ENCODE measurements at regions of chr16 and their contacts with region 1.

Region 1: GRCh38 chr16:2838928-2839327 is 8.8 kb downstream of the ZG16B start:
- DNase-seq: no peak
- ATAC-seq: peak; percentile 51
- H3K4me3 ChIP-seq: no peak overlapping the region
- H3K27ac ChIP-seq: peak overlapping the region; percentile 7
- H3K4me1 ChIP-seq: peaks cover 25 to 72% of the 10 kb centered on the region in 2 experiments
- H3K27me3 ChIP-seq: no peaks in the 10 kb centered on the region
- CTCF ChIP-seq: peak in 2 of 3 experiments; percentile 93 to 95; a peak in 4 of 6 replicates
- POLR2A ChIP-seq: no peak
- RAD21 ChIP-seq: no peak

Region 2: DNA sequence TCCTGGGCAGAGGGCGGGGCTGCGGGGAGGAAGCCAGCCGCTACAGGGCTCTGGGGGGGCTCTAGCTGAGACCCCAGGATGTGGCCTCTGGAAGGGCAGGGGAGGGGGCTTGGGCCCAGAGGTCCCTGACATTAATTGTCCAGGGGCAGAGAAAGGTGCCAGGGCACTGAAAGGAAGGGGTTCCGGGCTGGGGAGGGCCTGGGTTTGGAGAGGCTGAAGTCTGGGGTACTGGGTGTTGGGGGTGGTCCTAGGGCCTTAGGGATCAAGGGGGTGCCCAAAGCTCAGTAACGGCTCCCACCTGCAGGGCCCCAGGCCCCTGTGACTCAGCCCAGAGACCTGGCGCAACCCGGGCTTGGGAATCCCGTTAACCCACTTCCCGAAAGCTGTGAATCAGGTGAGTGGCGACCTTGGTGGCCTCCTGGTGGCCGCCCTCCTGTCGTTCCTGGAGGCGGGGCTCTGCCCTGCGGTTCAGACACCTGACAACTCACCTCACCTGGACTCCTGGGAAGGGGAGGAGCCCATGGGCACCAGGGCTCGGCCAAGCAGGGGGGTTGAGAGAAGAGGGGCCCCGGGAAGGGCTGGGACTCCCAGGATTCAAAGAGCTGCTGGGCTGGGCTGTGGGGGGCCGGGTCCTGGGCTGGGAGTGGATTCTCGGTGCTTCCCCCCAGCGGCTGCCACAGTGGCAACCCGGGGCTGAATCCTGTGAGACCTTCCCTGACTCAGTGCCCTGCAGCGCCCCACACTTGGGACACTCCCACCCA is 19.5 kb after region 1 on chr16:
- CTCF ChIA-PET with region 1: interaction called, 12 read pairs
- POLR2A ChIA-PET with region 1: interaction called, 3 read pairs
- RAD21 ChIA-PET with region 1: no interaction called
- intact Hi-C with region 1: loop called (anchors 1 kb)
- DNase-seq: peak; percentile 85
- ATAC-seq: peak; percentile 83
- H3K4me3 ChIP-seq: peak overlapping the region; percentile 52 to 69
- H3K27ac ChIP-seq: peak overlapping the region; percentile 89
- H3K4me1 ChIP-seq: peaks cover 18 to 52% of the 10 kb centered on the region in 2 experiments
- H3K27me3 ChIP-seq: no peaks in the 10 kb centered on the region
- CTCF ChIP-seq: no peak; a peak in 3 of 6 replicates
- POLR2A ChIP-seq: no peak
- RAD21 ChIP-seq: no peak; the same call in 1 of the 2 replicates

Region 3: GRCh38 chr16:2867987-2868789 is 29.3 kb after region 1 on chr16:
- CTCF ChIA-PET with region 1: interaction called, 42 read pairs
- POLR2A ChIA-PET with region 1: interaction called, 14 read pairs
- RAD21 ChIA-PET with region 1: interaction called in 1 of 2 experiments, 10 read pairs
- intact Hi-C with region 1: loop called (anchors 1 kb)
- DNase-seq: peak; percentile 86
- ATAC-seq: peak; percentile 96
- H3K4me3 ChIP-seq: peak overlapping the region; percentile 55 to 73
- H3K27ac ChIP-seq: peak overlapping the region; percentile 92
- H3K4me1 ChIP-seq: peaks cover 8 to 24% of the 10 kb centered on the region in 2 experiments; a peak in 3 of 4 replicates
- H3K27me3 ChIP-seq: no peaks in the 10 kb centered on the region
- CTCF ChIP-seq: peak; percentile 95 to 96 (median 96)
- POLR2A ChIP-seq: peak; percentile 90
- RAD21 ChIP-seq: peak; percentile 100

Region 4: GRCh38 chr16:2874912-2875362 is 36.0 kb after region 1 on chr16:
- CTCF ChIA-PET with region 1: interaction called, 11 read pairs
- POLR2A ChIA-PET with region 1: interaction called, 4 read pairs
- RAD21 ChIA-PET with region 1: no interaction called
- intact Hi-C with region 1: no loop called
- DNase-seq: peak; percentile 67
- ATAC-seq: peak; percentile 97
- H3K4me3 ChIP-seq: peak overlapping the region; percentile 27 to 47
- H3K27ac ChIP-seq: peak overlapping the region; percentile 41; the same call in 1 of the 2 replicates
- H3K4me1 ChIP-seq: peaks cover 19 to 34% of the 10 kb centered on the region in 2 experiments
- H3K27me3 ChIP-seq: no peaks in the 10 kb centered on the region
- CTCF ChIP-seq: peak; percentile 89 to 96 (median 96)
- POLR2A ChIP-seq: no peak
- RAD21 ChIP-seq: peak; percentile 83

Region 5: DNA sequence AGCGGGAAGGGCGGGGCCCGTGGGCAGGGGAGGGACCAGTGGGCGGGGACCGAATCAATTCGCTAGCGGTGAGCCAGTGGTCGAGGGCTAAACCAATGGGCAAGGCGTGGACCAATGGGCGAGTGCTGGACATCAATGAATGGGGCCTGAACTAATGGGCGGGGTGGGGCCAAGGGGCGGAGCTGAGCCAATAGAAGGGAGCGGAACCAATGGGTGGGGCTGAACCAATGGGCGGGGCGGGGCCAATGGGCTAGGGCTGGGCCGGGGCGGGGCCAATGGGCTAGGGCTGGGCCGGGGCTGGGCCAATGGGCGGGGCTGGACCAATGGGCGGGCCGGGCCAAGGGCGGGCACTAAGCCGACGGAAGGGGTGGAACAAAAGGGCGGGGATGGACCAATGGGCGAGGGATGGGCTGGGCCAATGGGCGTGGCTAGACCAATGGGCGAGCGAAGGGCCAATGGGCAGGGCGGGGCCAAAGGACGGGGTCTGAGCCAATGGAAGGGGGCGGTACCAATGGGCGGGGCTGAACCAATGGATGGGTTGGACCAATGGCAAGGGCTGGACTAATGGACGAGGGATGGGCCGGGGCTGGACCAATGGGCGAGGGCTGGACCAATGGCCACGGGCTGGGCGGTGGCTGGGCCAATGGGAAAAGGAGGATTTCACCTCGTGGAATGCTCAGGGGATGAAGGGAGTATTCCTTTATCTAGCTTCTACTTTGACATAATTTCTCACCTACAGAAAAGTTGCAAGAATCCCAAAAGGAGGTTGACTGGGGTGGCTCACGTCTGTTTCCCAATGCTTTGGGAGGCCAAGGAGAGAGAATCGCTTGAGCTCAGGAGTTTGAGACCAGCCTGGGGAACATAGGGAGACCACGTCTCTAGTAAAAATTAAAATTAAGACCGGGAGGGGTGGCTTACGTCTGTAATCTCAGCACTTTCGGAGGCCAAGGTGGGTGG is 66.8 kb after region 1 on chr16:
- CTCF ChIA-PET with region 1: interaction called, 8 read pairs
- POLR2A ChIA-PET with region 1: interaction called, 5 read pairs
- RAD21 ChIA-PET with region 1: no interaction called
- intact Hi-C with region 1: loop called (anchors 2 kb)
- DNase-seq: peak; percentile 99
- ATAC-seq: peak; percentile 78
- H3K4me3 ChIP-seq: peak overlapping the region; percentile 76 to 93
- H3K27ac ChIP-seq: peak overlapping the region; percentile 97
- H3K4me1 ChIP-seq: peaks cover 12 to 22% of the 10 kb centered on the region in 2 experiments
- H3K27me3 ChIP-seq: no peaks in the 10 kb centered on the region
- CTCF ChIP-seq: no peak
- POLR2A ChIP-seq: no peak
- RAD21 ChIP-seq: no peak

Region 6: DNA sequence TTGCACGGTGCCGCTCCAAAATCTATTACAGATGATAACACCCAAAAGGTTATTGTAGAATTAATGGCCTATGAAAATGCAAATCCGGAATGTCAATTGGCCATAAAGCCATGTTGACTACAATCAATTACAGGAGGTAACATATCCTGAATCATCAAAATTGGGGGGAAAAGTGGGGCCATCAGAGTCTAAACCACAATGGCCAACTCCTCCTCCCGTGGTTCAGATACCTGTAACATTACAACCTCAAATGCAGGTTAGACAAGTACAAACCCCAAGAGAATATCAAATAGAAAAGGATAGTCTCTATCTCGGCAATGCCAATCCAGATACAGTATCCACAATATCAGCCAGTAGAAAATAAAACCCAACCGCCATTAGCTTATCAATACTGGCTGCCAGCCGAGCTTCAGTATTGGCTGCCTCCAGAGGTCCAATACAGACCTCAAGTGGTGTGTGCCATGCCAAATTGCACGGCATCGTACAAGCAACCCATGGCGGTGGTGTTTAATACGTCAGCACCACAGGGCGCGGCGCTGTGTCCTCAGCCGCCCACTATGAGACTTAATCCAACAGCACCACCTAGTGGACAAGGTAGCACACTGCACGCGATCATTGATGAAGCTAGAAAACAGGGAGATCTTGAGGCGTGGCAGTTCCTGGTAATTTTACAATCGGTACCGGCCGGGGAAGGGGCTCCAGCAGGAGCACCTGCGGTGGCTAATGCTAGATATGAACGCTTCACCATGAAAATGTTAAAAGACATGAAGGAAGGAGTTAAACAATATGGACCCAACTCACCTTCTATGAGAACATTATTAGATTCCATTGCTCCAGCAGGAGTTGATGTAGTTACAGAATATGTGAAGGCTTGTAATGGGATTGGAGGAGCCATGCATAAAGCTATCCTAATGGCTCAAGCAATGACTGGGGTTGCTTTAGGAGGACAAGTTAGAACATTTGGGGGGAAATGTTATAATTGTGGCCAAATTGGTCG is 88.0 kb after region 1 on chr16:
- CTCF ChIA-PET with region 1: interaction called, 10 read pairs
- POLR2A ChIA-PET with region 1: no interaction called
- RAD21 ChIA-PET with region 1: interaction called in 1 of 2 experiments, 5 read pairs
- intact Hi-C with region 1: no loop called
- DNase-seq: peak; percentile 85
- ATAC-seq: peak; percentile 96
- H3K4me3 ChIP-seq: no peak overlapping the region
- H3K27ac ChIP-seq: no peak overlapping the region
- H3K4me1 ChIP-seq: peaks cover 0 to 11% of the 10 kb centered on the region in 2 experiments; a peak in 3 of 4 replicates
- H3K27me3 ChIP-seq: no peaks in the 10 kb centered on the region
- CTCF ChIP-seq: peak; percentile 93 to 98 (median 97)
- POLR2A ChIP-seq: no peak
- RAD21 ChIP-seq: peak; percentile 87

Region 7: DNA sequence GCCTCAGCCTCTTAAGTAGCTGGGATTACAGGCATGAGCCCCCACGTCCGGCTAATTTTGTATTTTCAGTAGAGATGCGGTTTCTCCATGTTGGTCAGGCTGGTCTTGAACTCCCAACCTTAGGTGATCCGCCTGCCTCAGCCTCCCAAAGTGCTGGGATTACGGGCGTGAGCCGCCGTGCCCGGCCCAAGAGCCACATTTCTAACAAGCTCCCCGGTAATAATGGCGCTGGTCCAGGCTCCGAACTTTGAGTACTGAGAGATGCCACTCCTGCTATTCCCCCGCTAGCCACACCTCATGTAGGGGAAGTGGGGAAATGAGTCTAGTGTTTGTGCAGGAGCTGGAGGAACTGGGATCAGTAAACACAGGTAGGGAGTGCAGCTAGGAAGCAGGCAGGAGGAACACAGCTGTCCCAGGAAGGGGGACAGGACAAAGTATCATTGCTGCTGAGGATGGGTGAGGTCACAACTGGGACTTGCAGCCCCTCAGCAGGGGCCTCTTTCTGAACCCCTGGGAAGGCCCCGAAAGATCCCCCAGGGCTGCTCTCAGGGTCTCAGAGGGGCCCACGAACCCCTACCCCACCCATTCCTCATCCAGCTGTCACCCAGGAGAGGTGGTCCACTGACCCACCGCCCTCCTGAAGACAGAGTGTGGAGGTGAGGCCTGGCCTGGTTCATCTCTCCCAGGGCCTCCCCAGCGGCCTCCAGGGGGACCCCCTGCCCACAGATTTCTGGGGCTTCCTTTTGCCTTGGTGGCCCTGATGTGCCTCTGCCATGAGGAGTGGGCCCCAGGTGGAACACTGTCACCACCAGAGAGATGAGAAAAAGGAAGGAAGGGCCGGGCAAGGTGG is 121.5 kb after region 1 on chr16:
- CTCF ChIA-PET with region 1: no interaction called
- POLR2A ChIA-PET with region 1: no interaction called
- RAD21 ChIA-PET with region 1: no interaction called
- intact Hi-C with region 1: loop called (anchors 2 kb)
- DNase-seq: no peak
- ATAC-seq: no peak
- H3K4me3 ChIP-seq: no peak overlapping the region
- H3K27ac ChIP-seq: no peak overlapping the region
- H3K4me1 ChIP-seq: peaks cover 11 to 54% of the 10 kb centered on the region in 2 experiments
- H3K27me3 ChIP-seq: no peaks in the 10 kb centered on the region
- CTCF ChIP-seq: no peak
- POLR2A ChIP-seq: no peak
- RAD21 ChIP-seq: no peak

Measured in HCT116 (cell line).